ENCODE measurements at regions of chr16 and their contacts with region 1.

Region 1: DNA sequence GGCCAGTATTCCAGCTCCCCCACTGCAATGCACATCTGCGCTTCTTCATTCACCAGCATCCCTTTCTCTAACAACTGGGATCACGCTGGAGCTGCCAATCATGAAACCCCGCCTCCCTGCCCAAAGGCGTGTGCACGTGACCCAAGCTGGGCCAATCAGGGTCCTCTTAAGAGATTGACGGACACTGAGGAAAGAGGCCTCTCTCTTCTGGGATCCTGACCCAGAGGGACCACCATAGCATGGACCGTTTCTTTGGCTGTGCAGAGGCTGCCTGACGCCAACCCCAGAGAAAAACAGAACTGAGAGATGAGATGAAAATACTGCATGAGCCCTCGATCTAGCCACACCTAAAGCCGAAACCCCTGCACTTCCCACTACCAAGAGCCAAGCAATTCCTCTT is 32.0 kb downstream of the COTL1 start:
- DNase-seq: peak; percentile 38 to 84
- H3K4me3 ChIP-seq: no peak overlapping the region
- H3K27ac ChIP-seq: no peak overlapping the region
- H3K4me1 ChIP-seq: peaks cover 0 to 6% (median 0%) of the 10 kb centered on the region in 4 experiments; a peak in 3 of 7 replicates
- H3K27me3 ChIP-seq: no peaks in the 10 kb centered on the region
- CTCF ChIP-seq: no peak
- EP300 ChIP-seq: no peak
- POLR2A ChIP-seq: no peak
- RAD21 ChIP-seq: no peak

Region 2: GRCh38 chr16:84498859-84499620 is 86.8 kb before region 1 on chr16:
- CTCF ChIA-PET with region 1: no interaction called
- POLR2A ChIA-PET with region 1: no interaction called
- DNase-seq: no peak
- H3K4me3 ChIP-seq: no peak overlapping the region
- H3K27ac ChIP-seq: no peak overlapping the region
- H3K4me1 ChIP-seq: peaks cover 0 to 5% (median 4%) of the 10 kb centered on the region in 4 experiments; a peak in 5 of 7 replicates
- H3K27me3 ChIP-seq: no peaks in the 10 kb centered on the region
- CTCF ChIP-seq: no peak
- EP300 ChIP-seq: no peak
- POLR2A ChIP-seq: no peak
- RAD21 ChIP-seq: no peak

Region 3: DNA sequence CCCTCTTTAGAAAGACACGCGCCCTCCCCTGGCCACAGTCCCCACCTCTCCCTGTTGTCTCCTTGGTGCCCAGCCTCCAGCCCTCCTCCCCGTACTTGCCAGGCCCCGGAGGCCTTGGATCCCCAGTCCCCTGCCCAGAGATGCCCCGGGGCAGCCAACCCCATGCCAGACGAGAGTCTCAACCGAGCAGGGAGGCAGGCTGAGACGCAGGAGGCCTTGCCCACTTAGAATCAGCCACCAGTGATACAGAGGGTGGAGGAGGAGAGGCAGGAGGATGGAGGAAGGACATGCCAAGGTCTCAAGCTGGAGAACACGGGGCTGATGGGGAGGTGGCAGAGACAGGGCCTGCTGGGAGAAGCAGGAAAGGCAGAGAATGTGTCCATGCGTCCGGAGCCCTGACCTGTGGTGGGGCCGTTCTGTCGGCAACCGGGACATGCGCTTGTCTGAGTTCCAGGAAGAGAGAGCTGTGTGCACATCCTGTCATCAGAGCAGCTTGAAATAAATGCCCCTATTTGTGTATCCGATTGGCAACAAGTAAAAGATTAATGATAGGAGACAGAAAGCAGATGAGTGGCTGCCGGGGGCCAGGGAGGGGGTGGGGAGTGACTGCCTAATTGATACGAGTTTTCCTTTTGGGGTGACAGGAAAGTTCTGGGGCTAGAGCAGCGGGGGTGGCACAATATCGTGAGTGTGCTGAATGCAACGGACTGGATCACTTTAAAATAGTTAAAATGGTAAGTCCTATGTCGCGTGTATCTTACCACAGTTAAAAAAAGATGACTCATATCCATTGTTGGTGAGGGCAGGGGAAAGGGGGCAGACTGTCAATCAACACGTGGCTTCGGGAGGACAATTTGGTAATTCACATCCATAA is 36.7 kb before region 1 on chr16:
- CTCF ChIA-PET with region 1: no interaction called
- POLR2A ChIA-PET with region 1: no interaction called
- DNase-seq: no peak
- H3K4me3 ChIP-seq: no peak overlapping the region
- H3K27ac ChIP-seq: no peak overlapping the region
- H3K4me1 ChIP-seq: peaks cover 0 to 23% (median 13%) of the 10 kb centered on the region in 4 experiments; a peak in 6 of 7 replicates
- H3K27me3 ChIP-seq: peaks cover 0 to 3% (median 0%) of the 10 kb centered on the region in 4 experiments; a peak in 1 of 7 replicates
- CTCF ChIP-seq: no peak
- EP300 ChIP-seq: no peak
- POLR2A ChIP-seq: no peak
- RAD21 ChIP-seq: no peak

Region 4: GRCh38 chr16:84562174-84562815 is 23.6 kb before region 1 on chr16:
- CTCF ChIA-PET with region 1: interaction called, 29 read pairs
- POLR2A ChIA-PET with region 1: interaction called, 7 read pairs
- DNase-seq: no peak
- H3K4me3 ChIP-seq: no peak overlapping the region; a peak in 1 of 8 replicates
- H3K27ac ChIP-seq: no peak overlapping the region
- H3K4me1 ChIP-seq: peaks cover 13 to 39% (median 28%) of the 10 kb centered on the region in 4 experiments
- H3K27me3 ChIP-seq: no peaks in the 10 kb centered on the region
- CTCF ChIP-seq: no peak
- EP300 ChIP-seq: no peak
- POLR2A ChIP-seq: no peak
- RAD21 ChIP-seq: no peak

Region 5: DNA sequence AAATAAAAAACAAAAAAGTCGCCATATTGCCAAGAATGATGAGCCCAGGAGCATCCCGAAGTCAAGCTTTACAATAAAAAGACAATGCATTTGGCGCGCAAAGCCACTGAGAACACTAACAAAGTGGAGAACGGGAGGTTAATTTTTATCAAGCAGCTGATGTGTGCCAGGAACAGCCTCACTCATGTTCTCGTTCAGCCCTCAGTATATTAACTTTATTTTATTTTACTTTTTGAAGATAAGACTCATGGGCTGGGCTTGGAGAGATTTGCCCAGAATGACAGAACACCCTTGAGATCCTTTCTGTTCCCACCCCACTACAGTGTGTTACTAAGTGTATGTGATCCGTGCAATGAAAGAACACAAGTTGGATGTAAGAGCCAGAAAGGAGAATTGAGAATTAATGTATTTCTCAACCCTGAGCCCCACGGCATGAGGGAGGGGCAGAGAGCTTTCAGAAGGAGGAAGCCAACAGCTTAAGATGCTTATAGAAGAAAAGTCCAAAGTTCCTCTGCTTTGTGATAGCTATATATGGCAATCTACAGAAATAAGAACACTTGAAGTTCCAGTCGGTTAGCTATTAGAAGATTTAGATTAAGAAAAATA is 16.4 kb before region 1 on chr16:
- CTCF ChIA-PET with region 1: interaction called, 29 read pairs
- POLR2A ChIA-PET with region 1: interaction called, 3 read pairs
- DNase-seq: no peak
- H3K4me3 ChIP-seq: no peak overlapping the region
- H3K27ac ChIP-seq: no peak overlapping the region
- H3K4me1 ChIP-seq: peaks cover 12 to 18% (median 16%) of the 10 kb centered on the region in 4 experiments
- H3K27me3 ChIP-seq: no peaks in the 10 kb centered on the region
- CTCF ChIP-seq: no peak
- EP300 ChIP-seq: no peak
- POLR2A ChIP-seq: no peak
- RAD21 ChIP-seq: no peak